ENCODE measurements at regions of chr2 and their contacts with region 1.

Region 1: DNA sequence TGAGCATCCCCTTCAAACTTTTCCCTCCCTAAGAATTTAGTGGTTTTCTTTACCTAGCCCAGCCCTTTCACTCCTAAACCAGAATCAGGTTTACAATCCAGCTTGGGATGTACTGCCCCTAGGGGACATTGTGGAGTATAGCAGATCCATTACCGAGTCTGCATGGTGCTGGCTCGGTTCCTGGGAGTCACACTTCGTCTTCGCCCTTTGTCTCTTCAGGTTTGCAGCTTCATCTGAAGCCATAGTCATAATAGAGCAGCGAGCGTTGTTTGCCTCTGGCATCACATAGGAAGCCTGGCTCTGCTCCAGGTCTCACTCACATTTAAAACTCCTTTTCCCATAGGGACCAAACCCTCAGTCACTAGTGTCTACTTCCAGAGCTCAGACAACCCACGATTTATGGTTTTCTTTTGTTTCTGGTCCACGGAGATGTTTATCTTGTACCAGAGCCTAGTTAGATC is 16.8 kb upstream of the LYPD6 start:
- DNase-seq: peak; percentile 48
- ATAC-seq: peak; percentile 89
- H3K4me3 Mint-ChIP-seq: 0 out of 2 replicates have a peak overlapping the region, but pooled peaks have one; percentile 2
- H3K27ac Mint-ChIP-seq: no peak overlapping the region
- H3K4me1 Mint-ChIP-seq: peaks cover 34% of the 10 kb centered on the region
- H3K27me3 Mint-ChIP-seq: no peaks in the 10 kb centered on the region; the same call in 1 of the 2 replicates
- CTCF ChIP-seq: peak; percentile 77

Region 2: GRCh38 chr2:149330126-149331022 is 16.8 kb after region 1 on chr2 and contains the start of gene LYPD6:
- CTCF ChIA-PET with region 1: interaction called, 18 read pairs
- POLR2A ChIA-PET with region 1: no interaction called
- DNase-seq: peak; percentile 71
- ATAC-seq: peak; percentile 83
- H3K4me3 Mint-ChIP-seq: peak within 1 kb of the TSS; percentile 80
- H3K27ac Mint-ChIP-seq: no peak within 1 kb of the TSS; the same call in 1 of the 2 replicates
- H3K4me1 Mint-ChIP-seq: peaks cover 27% of the 10 kb centered on the region
- H3K27me3 Mint-ChIP-seq: peaks cover 20% of the 10 kb centered on the region
- CTCF ChIP-seq: no peak
- total RNA-seq, gene LYPD6: 4.8 to 5.1 TPM (median 5.0 TPM) in 3 replicates